B cell (primary cell): ENCODE measurements at regions of chr1 and their contacts with region 1.

Region 1: GRCh38 chr1:58699011-58699762 is 675 bp downstream of the MYSM1 start:
- DNase-seq: no peak
- ATAC-seq: no peak
- H3K4me3 ChIP-seq: peak overlapping the region; percentile 61 to 99 (median 93)
- H3K4me3 Mint-ChIP-seq: peak overlapping the region; percentile 96
- H3K27ac ChIP-seq: peak overlapping the region; percentile 79 to 90
- H3K27ac Mint-ChIP-seq: peak overlapping the region; percentile 98
- H3K4me1 ChIP-seq: peaks cover 14 to 17% of the 10 kb centered on the region in 2 donors
- H3K4me1 Mint-ChIP-seq: peaks cover 23% of the 10 kb centered on the region
- H3K27me3 ChIP-seq: no peaks in the 10 kb centered on the region
- H3K27me3 Mint-ChIP-seq: no peaks in the 10 kb centered on the region
- CTCF ChIP-seq: no peak

Region 2: GRCh38 chr1:59560807-59561450 is 861.7 kb after region 1 on chr1:
- CTCF ChIA-PET with region 1: no interaction called
- POLR2A ChIA-PET with region 1: no interaction called
- intact Hi-C with region 1: loop called (anchors 5 kb)
- DNase-seq: peak; percentile 41
- ATAC-seq: peak; percentile 89
- H3K4me3 ChIP-seq: peak overlapping the region in 1 of 5 experiments; percentile 5
- H3K4me3 Mint-ChIP-seq: peak overlapping the region; percentile 56
- H3K27ac ChIP-seq: peak overlapping the region; percentile 11 to 58
- H3K27ac Mint-ChIP-seq: peak overlapping the region; percentile 84
- H3K4me1 ChIP-seq: peaks cover 30 to 31% of the 10 kb centered on the region in 2 donors
- H3K4me1 Mint-ChIP-seq: peaks cover 42% of the 10 kb centered on the region
- H3K27me3 ChIP-seq: no peaks in the 10 kb centered on the region
- H3K27me3 Mint-ChIP-seq: no peaks in the 10 kb centered on the region
- CTCF ChIP-seq: no peak